ENCODE measurements at regions of chr4 and their contacts with region 1.

Region 1: GRCh38 chr4:3201718-3202702 is 46.9 kb upstream of the MSANTD1 start:
- DNase-seq: peak; percentile 20
- H3K4me3 ChIP-seq: no peak overlapping the region
- H3K27ac ChIP-seq: no peak overlapping the region
- H3K27me3 ChIP-seq: no peaks in the 10 kb centered on the region
- CTCF ChIP-seq: no peak

Region 2: DNA sequence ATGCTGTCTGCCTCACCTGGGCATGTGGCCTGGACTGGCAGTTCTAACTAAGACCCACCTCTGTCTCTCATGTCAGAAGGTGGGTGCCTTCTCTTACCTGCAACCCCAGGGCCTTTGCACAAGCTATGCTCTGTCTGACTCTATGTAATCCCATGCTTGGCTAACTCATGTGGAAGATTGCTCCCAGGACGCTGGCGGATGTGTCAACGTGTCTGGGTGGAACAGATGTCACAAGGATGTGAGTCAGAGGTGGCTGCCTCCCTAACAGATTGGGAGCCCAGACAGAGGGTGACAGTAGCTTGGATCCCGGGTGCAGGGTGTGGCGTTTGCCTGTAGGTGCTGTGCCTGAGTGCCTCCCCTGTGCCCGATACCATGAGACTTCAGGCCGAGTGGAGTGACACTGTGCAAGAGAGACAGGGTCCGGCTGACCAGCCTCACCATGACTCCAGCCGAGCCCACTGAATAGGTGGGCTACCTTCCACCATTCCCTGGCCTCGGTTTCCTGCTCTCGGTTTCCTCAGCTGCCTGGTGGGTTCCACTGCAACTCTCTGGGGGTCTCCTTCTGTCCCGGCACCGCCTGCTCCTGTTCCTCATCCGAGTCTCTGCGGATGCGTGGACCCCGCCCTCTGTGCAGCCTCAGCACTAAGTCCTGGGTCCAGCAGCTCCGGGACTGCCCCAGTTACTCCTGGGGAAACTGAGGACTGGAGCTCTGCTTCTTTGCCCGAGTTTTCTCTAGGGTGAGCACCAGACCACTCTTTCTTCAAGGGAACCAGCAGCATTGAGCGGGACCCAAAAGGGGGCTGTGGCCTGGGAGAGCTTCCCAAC is 398.2 kb before region 1 on chr4:
- CTCF ChIA-PET with region 1: no interaction called
- POLR2A ChIA-PET with region 1: interaction called, 11 read pairs
- DNase-seq: no peak
- H3K4me3 ChIP-seq: no peak overlapping the region
- H3K27ac ChIP-seq: no peak overlapping the region
- H3K27me3 ChIP-seq: no peaks in the 10 kb centered on the region
- CTCF ChIP-seq: no peak

Region 3: DNA sequence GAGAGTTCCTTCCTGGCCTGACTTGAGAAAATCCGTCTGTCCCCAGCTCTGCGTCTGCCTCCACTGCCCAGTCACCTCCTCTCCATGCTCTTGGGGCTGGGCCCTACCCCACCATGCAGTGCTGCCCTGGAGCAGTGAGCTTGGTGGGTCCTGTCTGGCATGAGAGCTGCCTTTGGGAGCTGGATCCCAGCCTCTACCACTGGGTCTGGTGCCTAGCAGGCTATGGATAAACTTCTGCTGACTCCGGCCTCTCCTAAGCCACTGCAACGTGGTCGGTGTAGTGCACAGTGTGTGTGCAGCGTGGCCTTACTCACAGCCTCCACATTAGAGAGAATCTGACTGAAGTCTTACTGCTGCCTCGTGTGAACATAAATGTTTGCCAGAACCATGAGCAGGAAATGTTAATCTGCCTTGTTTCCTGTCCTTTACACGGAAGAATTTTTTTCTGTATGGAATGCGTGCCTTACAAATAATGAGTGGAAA is 79.9 kb before region 1 on chr4:
- CTCF ChIA-PET with region 1: no interaction called
- POLR2A ChIA-PET with region 1: no interaction called
- DNase-seq: no peak
- H3K4me3 ChIP-seq: no peak overlapping the region
- H3K27ac ChIP-seq: peak overlapping the region; percentile 71
- H3K27me3 ChIP-seq: no peaks in the 10 kb centered on the region
- CTCF ChIP-seq: no peak

Region 4: DNA sequence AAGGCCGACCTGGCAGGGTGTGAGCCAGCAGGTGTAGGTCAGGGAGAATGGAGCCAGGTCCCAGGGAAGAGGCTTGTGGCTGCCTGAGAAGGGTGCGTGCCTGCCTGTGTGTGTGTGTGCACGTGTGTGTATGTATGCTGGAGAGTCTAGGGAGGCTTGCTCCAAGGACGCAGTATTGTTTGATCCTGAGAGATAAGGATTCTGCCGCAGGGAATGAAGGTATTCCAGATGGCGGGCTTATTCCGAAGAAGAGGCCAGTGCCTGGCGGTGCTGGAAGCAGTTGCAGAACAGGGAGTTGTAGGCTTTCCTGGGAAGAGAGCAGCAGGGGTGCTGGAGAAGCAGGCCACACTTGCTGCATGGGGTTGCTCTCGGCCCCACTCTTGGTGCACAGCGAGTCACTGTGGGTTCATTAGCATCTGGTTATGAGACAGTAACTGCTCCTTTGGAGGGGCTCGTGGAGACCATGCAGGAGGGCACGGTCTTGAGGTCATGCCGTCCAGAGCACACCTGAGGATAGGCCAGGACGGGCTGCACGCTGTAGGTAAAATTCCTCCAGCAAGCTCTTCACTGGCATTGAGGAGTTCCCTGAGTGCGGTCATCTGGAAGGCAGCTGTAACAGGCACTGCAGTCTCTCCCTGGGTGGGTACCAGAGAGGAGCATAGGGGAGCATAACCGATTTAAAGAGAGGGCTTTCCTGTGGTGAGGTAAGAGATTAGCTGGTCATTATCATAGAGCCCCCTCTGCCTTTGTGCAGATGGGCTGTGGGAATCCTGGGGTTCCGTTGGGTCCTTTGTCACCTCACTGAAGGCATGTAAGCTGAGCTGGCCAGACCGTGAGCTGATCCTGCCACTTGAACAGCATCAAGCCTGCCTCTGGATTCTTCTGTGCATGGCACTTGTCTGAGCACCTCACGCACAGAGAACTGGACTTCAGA is 17.1 kb after region 1 on chr4:
- CTCF ChIA-PET with region 1: no interaction called
- POLR2A ChIA-PET with region 1: no interaction called
- DNase-seq: no peak
- H3K4me3 ChIP-seq: no peak overlapping the region
- H3K27ac ChIP-seq: no peak overlapping the region
- H3K27me3 ChIP-seq: no peaks in the 10 kb centered on the region
- CTCF ChIP-seq: no peak